Body of pancreas (tissue), 4 donors: ENCODE measurements at regions of chr1 and their contacts with region 1.

Region 1: GRCh38 chr1:109773146-109773899 is 9.6 kb upstream of the EPS8L3 start:
- DNase-seq: peak; percentile 86 to 92 (median 90)
- ATAC-seq: peak; percentile 89
- H3K4me3 ChIP-seq: no peak overlapping the region
- H3K27ac ChIP-seq: no peak overlapping the region
- H3K4me1 ChIP-seq: peaks cover 4% of the 10 kb centered on the region
- H3K27me3 ChIP-seq: no peaks in the 10 kb centered on the region
- CTCF ChIP-seq: peak; percentile 78 to 98 (median 96)
- POLR2A ChIP-seq: no peak

Region 2: GRCh38 chr1:109548321-109549267 is 224.7 kb before region 1 on chr1 and contains the start of gene GNAI3:
- intact Hi-C with region 1: loop called (anchors 10 kb)
- DNase-seq: peak; percentile 96 to 97 (median 96)
- ATAC-seq: peak; percentile 94
- H3K4me3 ChIP-seq: peak within 1 kb of the TSS; percentile 42 to 72
- H3K27ac ChIP-seq: peak within 1 kb of the TSS; percentile 94 to 98 (median 98)
- H3K4me1 ChIP-seq: peaks cover 32% of the 10 kb centered on the region
- H3K27me3 ChIP-seq: no peaks in the 10 kb centered on the region
- CTCF ChIP-seq: no peak
- POLR2A ChIP-seq: peak; percentile 98 to 100 (median 99)
- total RNA-seq, gene GNAI3: 3.6 to 4.9 TPM

Region 3: GRCh38 chr1:109643385-109644230 is 129.7 kb before region 1 on chr1:
- intact Hi-C with region 1: loop called (anchors 5 kb)
- DNase-seq: peak; percentile 81 to 89 (median 87)
- ATAC-seq: peak; percentile 96
- H3K4me3 ChIP-seq: no peak overlapping the region
- H3K27ac ChIP-seq: no peak overlapping the region
- H3K4me1 ChIP-seq: peaks cover 7% of the 10 kb centered on the region
- H3K27me3 ChIP-seq: no peaks in the 10 kb centered on the region
- CTCF ChIP-seq: peak; percentile 84 to 91 (median 88)
- POLR2A ChIP-seq: no peak

Region 4: DNA sequence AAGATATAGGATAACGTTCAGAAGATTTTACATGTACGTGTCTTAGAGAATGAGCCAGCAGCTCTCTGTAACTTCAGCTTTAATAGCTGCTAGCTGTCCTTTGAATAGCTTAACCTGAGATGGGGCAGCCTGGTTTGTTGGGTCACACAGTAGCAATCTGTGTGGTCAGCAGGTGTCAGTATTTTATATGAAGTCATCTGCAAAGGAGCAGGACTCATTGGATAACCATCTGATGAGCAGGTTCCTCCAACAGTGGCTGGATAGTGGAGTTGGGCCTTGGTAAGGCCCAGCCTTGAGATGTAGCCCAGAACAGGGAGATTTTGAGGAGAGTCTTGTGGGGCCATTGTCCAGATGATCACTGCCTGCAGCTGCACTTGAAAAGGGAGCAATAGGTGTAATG is 54.8 kb before region 1 on chr1:
- intact Hi-C with region 1: loop called (anchors 5 kb)
- DNase-seq: peak in 2 of 4 donors; percentile 45 to 51
- ATAC-seq: peak; percentile 80
- H3K4me3 ChIP-seq: no peak overlapping the region
- H3K27ac ChIP-seq: no peak overlapping the region
- H3K4me1 ChIP-seq: peaks cover under 1% of the 10 kb centered on the region
- H3K27me3 ChIP-seq: no peaks in the 10 kb centered on the region
- CTCF ChIP-seq: peak in 5 of 7 experiments; percentile 26 to 67 (median 43)
- POLR2A ChIP-seq: no peak

Region 5: GRCh38 chr1:109984456-109985275 is 211.3 kb after region 1 on chr1 and contains the start of gene AHCYL1:
- intact Hi-C with region 1: loop called (anchors 5 kb)
- DNase-seq: peak; percentile 100
- ATAC-seq: peak; percentile 97
- H3K4me3 ChIP-seq: peak within 1 kb of the TSS; percentile 39 to 46
- H3K27ac ChIP-seq: peak within 1 kb of the TSS; percentile 95 to 98 (median 96)
- H3K4me1 ChIP-seq: peaks cover 50% of the 10 kb centered on the region
- H3K27me3 ChIP-seq: no peaks in the 10 kb centered on the region
- CTCF ChIP-seq: peak; percentile 94 to 100 (median 99)
- POLR2A ChIP-seq: peak; percentile 95 to 99 (median 97)
- total RNA-seq, gene AHCYL1: 38.4 to 61.6 TPM

Region 6: GRCh38 chr1:110188035-110188618 is 414.8 kb after region 1 on chr1:
- intact Hi-C with region 1: no loop called
- DNase-seq: no peak
- ATAC-seq: no peak
- H3K4me3 ChIP-seq: no peak overlapping the region
- H3K27ac ChIP-seq: no peak overlapping the region
- H3K4me1 ChIP-seq: peaks cover 8% of the 10 kb centered on the region
- H3K27me3 ChIP-seq: no peaks in the 10 kb centered on the region
- CTCF ChIP-seq: no peak
- POLR2A ChIP-seq: no peak